PC-9 (cell line): ENCODE measurements at regions of chr7 and their contacts with region 1.

Region 1: DNA sequence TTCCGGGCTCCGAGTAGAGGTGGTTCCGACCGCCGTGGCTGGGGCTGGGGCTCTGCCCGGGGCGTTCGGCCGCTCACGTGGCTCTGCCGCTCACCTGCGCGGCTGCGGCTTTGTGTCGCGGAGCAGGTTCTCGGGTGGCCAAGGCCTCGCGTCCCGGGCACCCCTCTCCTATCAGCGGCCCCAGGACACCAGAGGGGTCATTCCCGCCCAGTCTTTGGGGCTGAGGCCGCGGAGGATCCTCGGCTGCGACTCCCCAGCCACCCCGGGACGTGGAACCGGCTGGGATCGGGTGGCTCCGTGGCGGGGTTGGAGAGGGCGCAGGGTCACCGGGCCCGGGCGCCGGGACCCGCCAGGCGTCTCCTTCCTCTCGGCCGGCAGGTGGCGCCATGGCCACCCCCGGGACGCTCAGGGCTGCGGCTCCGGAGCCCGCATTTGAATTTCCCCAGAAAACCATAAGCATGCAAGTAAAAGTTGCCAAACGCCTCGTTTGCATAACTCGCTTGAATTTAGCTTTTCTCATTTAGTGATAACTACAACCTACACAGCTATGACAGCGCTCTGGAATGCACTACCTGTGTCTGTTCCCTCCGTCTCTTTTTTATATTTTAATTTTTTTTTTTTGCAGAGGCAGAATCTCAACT is 1.2 kb downstream of the COL26A1 start:
- DNase-seq: peak; percentile 39 to 73
- H3K4me3 ChIP-seq: peak overlapping the region; percentile 34; the same call in 1 of the 2 replicates
- H3K27ac ChIP-seq: no peak overlapping the region
- H3K4me1 ChIP-seq: no peaks in the 10 kb centered on the region
- H3K27me3 ChIP-seq: 0 out of 2 replicates have a peak, but pooled peaks cover 7% of the 10 kb centered on the region
- CTCF ChIP-seq: peak; percentile 86

Region 2: DNA sequence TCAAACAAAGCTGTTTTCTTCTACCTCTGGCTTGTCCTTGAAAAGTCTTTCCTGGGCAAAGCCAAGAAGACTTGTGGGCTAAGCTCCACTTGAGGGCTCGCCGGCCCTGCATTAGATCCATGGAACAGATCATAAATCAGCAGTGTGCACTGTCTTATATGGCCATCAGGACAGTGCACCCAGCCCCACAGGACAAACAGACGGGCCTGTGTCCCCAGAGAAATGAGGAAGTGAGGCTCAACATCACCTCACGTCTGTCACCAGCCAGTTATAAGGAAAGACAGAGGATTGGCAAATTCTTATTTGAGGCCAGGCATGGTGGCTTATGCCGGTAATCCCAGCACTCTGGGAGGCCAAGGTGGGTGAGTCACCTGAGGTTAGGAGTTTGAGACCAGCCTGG is 29.9 kb before region 1 on chr7:
- CTCF ChIA-PET with region 1: interaction called, 12 read pairs
- POLR2A ChIA-PET with region 1: no interaction called
- intact Hi-C with region 1: no loop called
- DNase-seq: no peak
- H3K4me3 ChIP-seq: no peak overlapping the region
- H3K27ac ChIP-seq: no peak overlapping the region
- H3K4me1 ChIP-seq: no peaks in the 10 kb centered on the region
- H3K27me3 ChIP-seq: no peaks in the 10 kb centered on the region
- CTCF ChIP-seq: no peak

Region 3: DNA sequence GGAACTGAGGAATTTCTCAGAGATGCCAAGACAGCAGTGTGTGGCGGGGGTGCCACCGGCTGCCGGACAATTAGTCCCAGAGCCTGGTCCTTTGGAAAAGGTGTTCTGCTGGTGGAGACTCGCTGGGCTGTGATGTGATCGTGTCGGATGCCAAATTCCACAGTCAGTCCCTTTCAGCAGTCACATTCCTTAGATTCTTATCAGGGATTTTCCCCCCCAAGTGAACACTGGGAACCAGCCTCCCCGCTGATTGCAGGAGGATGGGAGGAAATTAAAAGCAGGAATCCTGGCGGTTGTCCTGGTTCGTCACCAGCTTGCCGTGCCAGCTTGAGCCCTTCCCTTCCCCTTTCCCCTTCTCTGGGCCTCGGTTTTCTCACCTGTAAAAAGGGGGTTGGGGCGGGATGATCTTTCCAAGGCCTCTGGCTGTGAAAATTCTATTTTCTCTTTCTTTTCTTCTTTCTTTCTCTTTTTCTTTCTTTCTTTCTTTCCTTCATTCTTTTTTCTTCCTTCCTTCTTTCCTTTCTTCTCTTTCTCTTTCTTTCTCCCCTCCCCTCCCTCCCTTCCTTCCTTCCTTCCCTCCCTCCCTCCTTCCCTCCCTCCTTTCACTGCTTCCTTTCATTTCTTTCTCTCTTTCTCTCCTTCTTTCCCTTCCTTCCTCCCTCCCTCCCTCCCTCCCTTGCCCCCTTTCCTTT is 38.4 kb after region 1 on chr7:
- CTCF ChIA-PET with region 1: interaction called, 16 read pairs
- POLR2A ChIA-PET with region 1: no interaction called
- intact Hi-C with region 1: no loop called
- DNase-seq: peak; percentile 71 to 81
- H3K4me3 ChIP-seq: peak overlapping the region; percentile 19; the same call in 1 of the 2 replicates
- H3K27ac ChIP-seq: no peak overlapping the region
- H3K4me1 ChIP-seq: peaks cover 14% of the 10 kb centered on the region
- H3K27me3 ChIP-seq: peaks cover 16% of the 10 kb centered on the region; the same call in 1 of the 2 replicates
- CTCF ChIP-seq: no peak

Region 4: GRCh38 chr7:101436857-101437576 is 73.2 kb after region 1 on chr7:
- CTCF ChIA-PET with region 1: interaction called, 4 read pairs
- POLR2A ChIA-PET with region 1: no interaction called
- intact Hi-C with region 1: loop called (anchors 1 kb)
- DNase-seq: peak in 1 of 2 experiments; percentile 35
- H3K4me3 ChIP-seq: no peak overlapping the region
- H3K27ac ChIP-seq: no peak overlapping the region
- H3K4me1 ChIP-seq: peaks cover 4% of the 10 kb centered on the region
- H3K27me3 ChIP-seq: peaks cover 33% of the 10 kb centered on the region
- CTCF ChIP-seq: no peak

Region 5: GRCh38 chr7:102272075-102272917 is 908.4 kb after region 1 on chr7:
- CTCF ChIA-PET with region 1: no interaction called
- POLR2A ChIA-PET with region 1: no interaction called
- intact Hi-C with region 1: loop called (anchors 5 kb)
- DNase-seq: peak in 1 of 2 experiments; percentile 86
- H3K4me3 ChIP-seq: no peak overlapping the region
- H3K27ac ChIP-seq: no peak overlapping the region
- H3K4me1 ChIP-seq: no peaks in the 10 kb centered on the region
- H3K27me3 ChIP-seq: no peaks in the 10 kb centered on the region
- CTCF ChIP-seq: peak; percentile 86